ENCODE measurements at regions of chr10 and their contacts with region 1.

Region 1: DNA sequence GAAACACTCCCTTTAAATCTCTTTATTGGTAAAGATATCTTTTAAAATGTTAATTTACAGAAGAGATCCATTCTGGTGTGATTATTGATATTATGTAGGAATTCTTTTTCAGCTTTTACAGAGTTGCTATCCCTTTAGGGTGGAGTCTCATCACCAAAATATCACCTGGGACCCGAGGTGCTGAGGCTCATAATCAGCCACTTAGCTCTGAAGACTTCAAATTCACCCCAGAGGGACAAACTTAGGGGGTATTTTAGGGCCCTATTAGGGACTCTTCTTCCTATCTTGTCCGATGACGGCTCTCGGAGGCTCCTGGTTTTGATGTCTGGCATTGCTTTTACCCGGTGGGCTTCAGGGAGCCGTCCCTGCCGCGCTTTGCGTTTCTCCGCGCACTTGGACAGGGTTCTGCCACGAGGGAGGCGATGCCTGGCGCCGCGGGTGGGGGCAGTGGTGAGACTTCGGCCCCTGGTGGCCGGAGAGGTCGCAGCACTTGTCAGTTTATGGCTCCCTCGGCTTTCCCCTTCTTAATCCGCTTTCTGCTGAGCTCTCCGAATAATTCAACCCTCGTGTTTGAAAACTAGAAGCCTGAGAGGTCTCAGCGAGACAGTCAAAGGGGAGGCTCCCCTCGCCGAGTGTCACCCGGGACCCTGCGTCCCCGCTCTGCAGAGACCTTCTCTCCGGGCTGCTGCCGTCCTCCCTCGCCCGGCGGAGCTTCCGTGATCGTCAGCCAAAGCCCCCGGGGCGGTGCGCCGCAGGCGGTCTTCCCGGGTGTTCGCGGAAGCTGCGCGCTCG is 27.8 kb downstream of the RBM20 start:
- DNase-seq: peak; percentile 78
- ATAC-seq: peak; percentile 98
- H3K4me3 Mint-ChIP-seq: peak overlapping the region; percentile 81
- H3K27ac Mint-ChIP-seq: peak overlapping the region; percentile 69
- H3K4me1 Mint-ChIP-seq: peaks cover 6% of the 10 kb centered on the region
- H3K27me3 Mint-ChIP-seq: peaks cover 44% of the 10 kb centered on the region

Region 2: GRCh38 chr10:110610308-110610774 is 61.6 kb before region 1 on chr10:
- CTCF ChIA-PET with region 1: interaction called, 42 read pairs
- POLR2A ChIA-PET with region 1: no interaction called
- DNase-seq: peak; percentile 71
- ATAC-seq: peak; percentile 60
- H3K4me3 Mint-ChIP-seq: no peak overlapping the region
- H3K27ac Mint-ChIP-seq: no peak overlapping the region
- H3K4me1 Mint-ChIP-seq: peaks cover 39% of the 10 kb centered on the region
- H3K27me3 Mint-ChIP-seq: no peaks in the 10 kb centered on the region

Region 3: DNA sequence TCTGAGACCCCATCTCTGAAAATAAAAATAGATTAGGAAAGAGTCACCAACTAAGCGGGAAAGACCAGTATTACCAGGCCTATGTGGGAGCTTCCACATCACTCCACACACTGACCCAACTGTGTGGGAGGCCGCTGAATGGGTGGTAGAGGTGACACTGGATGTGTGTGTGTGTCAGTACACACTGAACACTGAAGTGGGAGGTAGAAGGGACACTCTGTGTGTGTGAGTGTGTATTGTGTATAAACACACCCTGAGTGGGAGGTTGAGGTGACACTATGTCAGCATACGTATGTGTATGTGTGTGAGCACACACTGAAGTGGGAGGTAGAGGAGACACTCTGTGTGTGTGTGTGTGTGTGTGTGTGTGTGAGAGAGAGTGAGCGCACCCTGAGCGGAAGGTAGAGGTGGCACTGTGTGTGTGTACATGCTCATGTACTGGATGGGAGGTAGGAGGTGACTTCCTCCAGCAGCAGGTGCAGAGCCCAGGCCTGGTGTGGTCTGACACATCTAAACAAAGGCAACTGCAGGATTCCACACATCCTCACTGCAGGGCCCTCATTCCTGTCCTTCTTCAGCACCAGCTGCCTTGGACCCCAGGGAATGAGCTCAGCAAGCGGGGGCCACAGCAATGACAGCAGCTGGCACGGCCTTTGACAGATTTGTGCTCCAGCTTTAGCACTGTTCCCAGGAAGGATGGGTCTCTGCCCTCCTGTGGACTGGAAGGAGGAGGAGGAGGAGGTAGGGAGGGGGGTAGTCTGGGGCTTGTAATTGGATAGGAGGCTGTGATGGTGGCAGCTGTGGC is 54.4 kb before region 1 on chr10:
- CTCF ChIA-PET with region 1: interaction called, 42 read pairs
- POLR2A ChIA-PET with region 1: no interaction called
- DNase-seq: no peak
- ATAC-seq: peak; percentile 51
- H3K4me3 Mint-ChIP-seq: no peak overlapping the region
- H3K27ac Mint-ChIP-seq: peak overlapping the region; percentile 35
- H3K4me1 Mint-ChIP-seq: peaks cover 40% of the 10 kb centered on the region
- H3K27me3 Mint-ChIP-seq: no peaks in the 10 kb centered on the region

Region 4: DNA sequence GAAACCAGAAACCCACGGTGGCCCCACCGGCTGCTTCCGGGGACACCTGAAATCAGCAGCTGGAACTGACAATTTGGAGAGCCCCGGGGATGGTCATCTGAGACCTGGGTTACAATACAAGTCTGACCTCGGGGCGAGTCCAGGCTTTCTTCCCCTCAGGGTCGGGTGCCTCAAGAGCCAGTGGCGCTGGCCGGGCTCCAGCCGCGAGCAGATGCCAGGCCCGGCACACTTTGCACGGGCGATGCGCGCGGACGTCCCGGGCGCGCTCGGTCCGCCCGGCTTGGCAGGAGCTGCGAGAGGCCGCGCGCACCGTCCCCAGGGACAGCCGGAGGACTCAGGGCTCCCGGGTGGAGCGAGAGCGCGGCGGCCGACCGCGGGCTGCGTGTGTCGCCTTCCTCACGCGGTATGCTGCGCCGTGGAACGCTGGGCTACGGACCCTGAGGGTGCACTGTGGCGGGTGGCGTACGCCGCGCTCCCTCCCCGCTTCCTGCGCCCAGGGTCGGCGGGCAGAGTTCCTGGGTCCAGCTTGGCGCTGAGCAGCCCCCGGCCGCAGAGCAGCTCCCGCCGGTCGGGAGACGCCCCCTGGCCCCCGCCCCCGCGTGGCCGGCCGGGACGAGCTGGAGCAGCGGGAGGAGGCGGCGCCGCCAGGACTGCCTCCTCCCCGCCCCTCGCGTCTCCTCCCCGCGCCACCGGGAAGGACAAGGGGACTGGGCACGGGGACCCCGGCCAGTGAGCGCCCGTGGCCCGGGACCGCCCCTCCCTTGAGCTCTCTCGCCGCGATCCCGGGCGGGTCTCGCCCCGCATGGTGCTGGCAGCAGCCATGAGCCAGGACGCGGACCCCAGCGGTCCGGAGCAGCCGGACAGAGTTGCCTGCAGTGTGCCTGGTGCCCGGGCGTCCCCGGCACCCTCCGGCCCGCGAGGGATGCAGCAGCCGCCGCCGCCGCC is 28.1 kb before region 1 on chr10 and contains the start of gene RBM20:
- CTCF ChIA-PET with region 1: interaction called, 23 read pairs
- POLR2A ChIA-PET with region 1: no interaction called
- DNase-seq: peak; percentile 32
- ATAC-seq: peak; percentile 73
- H3K4me3 Mint-ChIP-seq: peak within 1 kb of the TSS; percentile 66
- H3K27ac Mint-ChIP-seq: no peak within 1 kb of the TSS
- H3K4me1 Mint-ChIP-seq: peaks cover 33% of the 10 kb centered on the region
- H3K27me3 Mint-ChIP-seq: peaks cover 56% of the 10 kb centered on the region
- total RNA-seq, gene RBM20: 0.03 TPM in 1 of 2 experiments, not detected in the other

Region 5: DNA sequence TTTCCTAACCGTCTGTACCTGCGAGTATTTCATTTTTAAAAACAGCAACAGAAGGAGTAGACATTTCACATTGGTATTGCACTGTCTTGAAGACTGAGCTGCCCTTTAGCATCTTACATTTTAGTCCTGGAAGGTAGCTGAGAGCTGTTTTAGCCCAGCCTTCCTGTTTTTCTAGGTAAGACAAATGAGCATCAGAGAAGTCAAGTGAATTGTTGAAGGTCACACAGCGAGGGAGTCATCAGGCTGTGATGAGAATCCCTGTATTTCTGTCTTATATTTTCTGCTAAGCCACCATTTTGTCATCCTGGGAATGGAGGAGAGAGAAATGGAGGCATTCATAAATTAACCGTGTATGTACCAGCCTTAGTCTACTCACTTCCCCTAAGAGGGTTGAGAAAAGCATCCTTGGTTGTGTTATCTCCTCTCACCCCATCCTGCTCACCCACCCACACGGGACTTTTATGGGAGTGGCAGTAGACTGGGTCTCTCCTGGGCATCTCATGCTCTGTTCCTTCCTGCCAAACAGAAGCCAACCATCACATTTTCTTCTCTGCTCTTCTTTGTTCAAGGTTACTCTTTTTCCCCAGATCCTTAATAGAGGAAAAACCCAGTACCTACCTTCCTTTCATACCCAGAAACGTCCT is 19.4 kb before region 1 on chr10:
- CTCF ChIA-PET with region 1: interaction called, 12 read pairs
- POLR2A ChIA-PET with region 1: interaction called, 3 read pairs
- DNase-seq: no peak
- ATAC-seq: no peak
- H3K4me3 Mint-ChIP-seq: no peak overlapping the region
- H3K27ac Mint-ChIP-seq: no peak overlapping the region
- H3K4me1 Mint-ChIP-seq: peaks cover 34% of the 10 kb centered on the region
- H3K27me3 Mint-ChIP-seq: peaks cover 39% of the 10 kb centered on the region

Region 6: DNA sequence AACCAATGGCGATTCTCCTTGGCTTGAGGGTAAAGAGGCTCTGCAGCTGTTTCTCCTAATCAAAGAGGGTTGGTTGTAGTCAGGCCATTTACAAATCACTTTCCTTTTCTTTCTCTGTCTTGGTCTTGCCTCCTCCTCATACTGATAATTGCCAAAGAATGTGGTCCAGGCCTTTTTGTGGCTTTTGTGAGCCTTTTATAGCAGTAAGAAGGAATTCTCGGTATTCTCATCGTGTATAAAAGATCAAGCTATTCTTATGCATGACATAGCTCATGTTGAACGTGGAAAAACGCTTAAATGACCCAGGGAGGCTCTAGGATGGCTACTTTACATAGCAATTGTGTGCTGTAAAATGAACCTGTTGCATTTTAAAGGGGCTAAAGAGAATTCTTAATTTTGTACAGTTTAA is 34.7 kb after region 1 on chr10:
- CTCF ChIA-PET with region 1: interaction called, 10 read pairs
- POLR2A ChIA-PET with region 1: no interaction called
- DNase-seq: no peak
- ATAC-seq: no peak
- H3K4me3 Mint-ChIP-seq: no peak overlapping the region
- H3K27ac Mint-ChIP-seq: no peak overlapping the region
- H3K4me1 Mint-ChIP-seq: no peaks in the 10 kb centered on the region
- H3K27me3 Mint-ChIP-seq: peaks cover 13% of the 10 kb centered on the region